WTC11 (cell line): ENCODE measurements at regions of chr7 and their contacts with region 1.

Region 1: DNA sequence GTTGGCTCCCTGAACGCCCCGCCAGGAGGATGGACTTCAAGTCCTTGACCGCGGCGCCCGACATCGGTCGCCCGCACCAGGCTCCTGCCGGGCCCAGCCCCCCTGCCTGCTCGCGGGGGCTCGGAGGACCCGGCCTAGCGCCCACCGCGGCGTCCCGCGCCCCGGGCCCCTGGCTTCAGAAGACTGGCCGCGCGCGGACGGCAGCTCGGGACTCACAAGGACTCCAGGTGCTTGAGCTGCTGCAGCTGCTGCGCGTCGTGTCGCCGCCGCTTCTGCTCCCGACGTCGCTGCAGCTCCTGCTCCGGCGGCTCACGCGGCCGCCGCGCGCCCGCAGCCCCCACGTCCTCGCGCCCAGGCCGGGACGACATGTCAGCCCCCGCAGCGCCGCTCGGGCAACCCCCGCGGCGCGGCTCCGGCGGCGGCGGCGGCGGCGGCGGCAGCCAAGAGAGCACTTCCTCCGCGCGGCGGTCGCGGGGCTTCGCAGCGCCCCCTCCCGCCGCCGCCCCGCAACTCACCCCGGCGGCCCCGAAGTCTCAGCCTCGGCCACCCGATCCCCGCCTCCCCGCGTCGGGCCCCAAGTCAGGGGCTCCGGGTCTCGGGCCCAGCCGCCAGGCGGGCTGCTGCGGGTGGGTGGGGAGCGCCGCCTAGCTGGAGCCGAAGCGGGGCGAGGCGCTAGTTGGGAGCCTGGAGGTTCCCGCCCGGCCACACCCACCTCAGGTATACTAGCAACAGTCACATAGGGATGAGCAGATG is at the start of gene RP9:
- DNase-seq: peak; percentile 87
- ATAC-seq: peak; percentile 95
- H3K4me3 Mint-ChIP-seq: peak within 1 kb of the TSS; percentile 91
- H3K27ac Mint-ChIP-seq: no peak within 1 kb of the TSS
- H3K4me1 Mint-ChIP-seq: peaks cover 17% of the 10 kb centered on the region
- H3K27me3 Mint-ChIP-seq: peaks cover 46% of the 10 kb centered on the region
- CTCF ChIP-seq: peak; percentile 60
- total RNA-seq, gene RP9: 10.7 to 10.9 TPM (median 10.8 TPM) in 3 replicates

Region 2: DNA sequence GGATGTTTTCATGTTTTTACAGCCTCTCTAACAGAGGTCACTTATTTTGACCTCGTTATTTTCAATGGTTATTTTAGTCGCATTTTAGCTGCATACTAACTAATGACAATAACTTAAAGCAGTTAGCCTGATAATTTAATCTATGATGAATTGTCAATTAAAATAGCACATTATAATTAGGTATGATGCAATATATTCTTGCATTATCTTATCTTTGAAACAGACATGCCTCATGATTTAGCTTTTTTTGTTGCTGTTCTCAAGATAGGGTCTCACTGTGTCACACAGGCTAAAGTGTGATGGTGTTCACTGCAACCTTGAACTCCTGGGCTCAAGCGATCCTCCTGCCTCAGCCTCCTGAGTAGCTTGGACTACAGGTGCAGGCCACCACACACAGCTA is 344.0 kb before region 1 on chr7:
- CTCF ChIA-PET with region 1: interaction called, 10 read pairs
- POLR2A ChIA-PET with region 1: no interaction called
- DNase-seq: no peak
- ATAC-seq: no peak
- H3K4me3 Mint-ChIP-seq: no peak overlapping the region
- H3K27ac Mint-ChIP-seq: no peak overlapping the region
- H3K4me1 Mint-ChIP-seq: peaks cover 25% of the 10 kb centered on the region
- H3K27me3 Mint-ChIP-seq: peaks cover 61% of the 10 kb centered on the region
- CTCF ChIP-seq: no peak

Region 3: GRCh38 chr7:32803406-32804141 is 305.6 kb before region 1 on chr7:
- CTCF ChIA-PET with region 1: interaction called, 10 read pairs
- POLR2A ChIA-PET with region 1: no interaction called
- DNase-seq: no peak
- ATAC-seq: no peak
- H3K4me3 Mint-ChIP-seq: no peak overlapping the region
- H3K27ac Mint-ChIP-seq: no peak overlapping the region
- H3K4me1 Mint-ChIP-seq: no peaks in the 10 kb centered on the region
- H3K27me3 Mint-ChIP-seq: peaks cover 34% of the 10 kb centered on the region
- CTCF ChIP-seq: no peak

Region 4: DNA sequence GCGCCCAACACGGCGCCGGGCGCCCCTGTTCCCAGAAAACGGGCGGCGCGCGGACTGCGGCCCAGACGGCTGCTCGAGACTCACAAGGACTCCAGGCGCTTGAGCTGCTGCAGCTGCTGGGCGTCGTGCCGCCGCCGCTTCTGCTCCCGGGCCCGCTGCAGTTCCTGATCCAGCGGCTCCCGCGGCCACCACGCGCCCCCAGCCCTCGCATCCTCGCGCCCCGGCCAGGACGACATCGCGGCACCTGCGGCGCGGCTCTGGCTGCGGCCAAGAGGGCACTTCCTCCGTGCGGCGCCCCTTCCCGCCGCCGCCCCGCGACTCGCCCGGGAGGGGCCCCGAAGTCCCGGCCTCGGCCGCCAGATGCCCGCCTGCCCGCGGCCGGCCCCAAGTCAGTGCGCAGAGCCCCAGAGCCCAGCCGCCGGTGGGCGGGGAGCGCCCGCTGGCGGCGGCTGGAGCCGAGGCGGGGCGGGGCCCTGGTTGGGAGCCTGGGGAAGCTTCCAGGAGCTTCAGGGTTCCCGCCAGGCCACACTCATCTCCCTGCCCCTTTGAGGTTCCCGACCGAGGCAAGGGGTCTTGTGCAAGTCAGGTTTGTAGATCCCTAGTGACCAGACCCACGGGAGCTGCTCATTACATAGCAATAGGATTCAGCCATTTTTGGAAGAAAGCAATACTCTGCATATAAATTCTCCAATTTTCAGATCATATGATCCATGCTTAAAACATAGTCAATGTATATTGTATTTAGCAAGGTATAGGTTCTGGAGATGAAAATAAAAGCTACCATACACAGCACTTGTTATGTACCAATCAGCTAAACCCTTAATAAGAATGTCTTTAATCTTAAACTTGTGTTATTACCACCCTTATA is 166.2 kb before region 1 on chr7:
- CTCF ChIA-PET with region 1: interaction called, 27 read pairs
- POLR2A ChIA-PET with region 1: no interaction called
- DNase-seq: peak; percentile 82
- ATAC-seq: peak; percentile 91
- H3K4me3 Mint-ChIP-seq: peak overlapping the region; percentile 30; the same call in 1 of the 2 replicates
- H3K27ac Mint-ChIP-seq: no peak overlapping the region
- H3K4me1 Mint-ChIP-seq: peaks cover 14% of the 10 kb centered on the region
- H3K27me3 Mint-ChIP-seq: peaks cover 97% of the 10 kb centered on the region
- CTCF ChIP-seq: no peak

Region 5: GRCh38 chr7:32957326-32958045 is 151.7 kb before region 1 on chr7 and contains the start of gene FKBP9:
- CTCF ChIA-PET with region 1: interaction called, 18 read pairs
- POLR2A ChIA-PET with region 1: no interaction called
- DNase-seq: peak; percentile 84
- ATAC-seq: peak; percentile 91
- H3K4me3 Mint-ChIP-seq: peak within 1 kb of the TSS; percentile 76
- H3K27ac Mint-ChIP-seq: peak within 1 kb of the TSS; percentile 27; the same call in 1 of the 2 replicates
- H3K4me1 Mint-ChIP-seq: peaks cover 10% of the 10 kb centered on the region
- H3K27me3 Mint-ChIP-seq: peaks cover 71% of the 10 kb centered on the region
- CTCF ChIP-seq: no peak
- total RNA-seq, gene FKBP9: 11.0 to 18.0 TPM (median 12.7 TPM) in 3 replicates

Region 6: GRCh38 chr7:33040803-33041516 is 68.2 kb before region 1 on chr7:
- CTCF ChIA-PET with region 1: no interaction called
- POLR2A ChIA-PET with region 1: no interaction called
- DNase-seq: no peak
- ATAC-seq: no peak; the same call in 1 of the 2 replicates
- H3K4me3 Mint-ChIP-seq: no peak overlapping the region
- H3K27ac Mint-ChIP-seq: no peak overlapping the region
- H3K4me1 Mint-ChIP-seq: peaks cover 10% of the 10 kb centered on the region; the same call in 1 of the 2 replicates
- H3K27me3 Mint-ChIP-seq: no peaks in the 10 kb centered on the region
- CTCF ChIP-seq: no peak

Region 7: DNA sequence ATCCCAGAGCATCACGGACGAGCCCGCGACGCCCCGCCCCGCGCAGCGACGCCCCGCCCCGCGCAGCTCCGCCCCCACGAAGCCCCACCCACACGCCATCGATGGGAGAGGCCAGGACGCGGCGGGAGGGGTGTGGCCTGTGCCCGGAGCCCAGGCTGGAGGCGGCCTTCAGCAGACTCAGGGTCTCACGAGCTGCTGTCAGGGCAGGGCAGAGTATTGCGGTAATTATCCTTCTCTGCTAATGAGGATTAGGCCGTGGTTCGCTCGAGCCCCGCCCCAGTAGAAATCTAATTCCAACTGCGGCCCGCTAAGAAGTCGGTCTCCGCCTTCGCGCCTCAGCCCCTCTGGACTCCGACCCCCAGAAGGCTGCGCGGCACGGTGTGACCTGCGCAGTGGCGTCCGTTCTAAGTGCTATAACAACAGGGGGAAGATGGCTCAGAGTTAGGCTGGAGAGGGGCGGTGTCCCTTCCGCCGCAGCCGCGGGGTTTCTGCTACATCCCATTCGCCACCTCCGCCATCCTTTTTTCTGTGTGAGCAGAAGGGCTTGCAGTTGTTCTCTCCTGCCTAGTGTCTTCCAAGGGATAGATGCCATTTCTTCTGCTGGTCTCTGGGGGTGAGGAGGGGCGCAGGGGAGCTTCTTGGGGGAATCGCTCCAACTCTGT is 46.3 kb before region 1 on chr7:
- CTCF ChIA-PET with region 1: interaction called, 26 read pairs
- POLR2A ChIA-PET with region 1: no interaction called
- DNase-seq: peak; percentile 92
- ATAC-seq: peak; percentile 97
- H3K4me3 Mint-ChIP-seq: peak overlapping the region; percentile 90
- H3K27ac Mint-ChIP-seq: peak overlapping the region; percentile 92
- H3K4me1 Mint-ChIP-seq: peaks cover 18% of the 10 kb centered on the region
- H3K27me3 Mint-ChIP-seq: no peaks in the 10 kb centered on the region; the same call in none of the 2 replicates
- CTCF ChIP-seq: no peak